ENCODE measurements at regions of chr10 and their contacts with region 1.

Region 1: DNA sequence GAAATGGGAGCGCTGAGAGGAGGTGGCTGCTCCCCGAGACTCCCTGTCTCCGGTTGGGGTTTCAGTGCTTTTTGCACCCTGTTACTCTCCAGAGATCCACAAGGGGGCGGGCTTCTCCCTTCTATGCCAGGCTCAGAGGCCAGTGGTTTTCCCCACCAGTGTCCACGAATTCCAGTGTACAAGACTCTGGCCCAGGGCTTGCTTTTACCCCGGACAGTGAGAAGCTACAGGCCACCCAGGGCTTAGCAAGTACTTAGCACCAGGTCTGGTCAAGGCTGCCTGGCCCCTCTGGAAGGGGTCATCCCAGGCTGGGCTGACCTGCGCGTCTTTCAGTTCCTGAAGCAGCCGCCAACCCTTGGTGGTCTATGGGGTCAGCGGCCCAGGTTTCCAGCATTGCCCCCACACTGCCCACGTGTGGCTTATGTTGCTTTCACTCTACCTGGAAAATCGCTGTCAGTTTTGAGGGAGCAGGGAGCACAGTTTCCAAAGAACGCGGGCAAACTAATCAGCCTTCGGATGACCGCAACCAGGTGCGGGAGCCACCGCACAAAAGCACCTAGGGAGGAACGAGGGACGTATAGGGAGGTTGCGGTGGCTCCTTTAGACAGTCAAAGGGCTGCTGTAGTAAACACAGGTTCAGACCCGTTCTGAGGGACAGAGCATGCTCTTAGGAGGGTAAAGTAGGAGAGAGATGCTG is 6.8 kb downstream of the CYP26A1 start:
- H3K4me3 ChIP-seq: no peak overlapping the region
- H3K27ac ChIP-seq: no peak overlapping the region
- H3K4me1 ChIP-seq: no peaks in the 10 kb centered on the region; the same call in none of the 2 replicates
- CTCF ChIP-seq: peak; percentile 54; the same call in 1 of the 2 replicates

Region 2: GRCh38 chr10:92923416-92923815 is 157.1 kb before region 1 on chr10:
- CTCF ChIA-PET with region 1: no interaction called
- POLR2A ChIA-PET with region 1: no interaction called
- H3K4me3 ChIP-seq: no peak overlapping the region
- H3K27ac ChIP-seq: no peak overlapping the region
- H3K4me1 ChIP-seq: no peaks in the 10 kb centered on the region
- CTCF ChIP-seq: no peak

Region 3: DNA sequence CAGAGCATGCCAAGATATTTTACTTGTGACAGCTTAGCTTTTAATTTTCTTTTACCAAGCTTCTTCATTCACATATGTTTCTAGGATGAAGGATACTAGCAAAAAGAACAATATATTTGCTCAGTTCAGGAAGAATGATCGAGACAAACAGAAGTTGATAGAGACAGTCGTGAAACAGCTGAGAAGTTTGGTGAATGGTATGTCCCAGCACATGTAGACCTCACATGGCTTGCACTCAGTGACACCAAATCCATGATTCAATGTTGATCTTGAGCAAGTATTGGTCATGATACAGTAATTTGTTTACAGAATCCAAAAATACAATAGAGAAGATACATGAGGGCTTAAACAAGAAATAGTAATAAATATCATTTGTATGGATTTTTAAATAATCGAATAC is 22.4 kb before region 1 on chr10:
- CTCF ChIA-PET with region 1: interaction called, 13 read pairs
- POLR2A ChIA-PET with region 1: no interaction called
- H3K4me3 ChIP-seq: no peak overlapping the region
- H3K27ac ChIP-seq: no peak overlapping the region
- H3K4me1 ChIP-seq: no peaks in the 10 kb centered on the region
- CTCF ChIP-seq: no peak

Region 4: GRCh38 chr10:93288654-93289634 is 208.4 kb after region 1 on chr10:
- CTCF ChIA-PET with region 1: interaction called, 23 read pairs
- POLR2A ChIA-PET with region 1: no interaction called
- H3K4me3 ChIP-seq: no peak overlapping the region
- H3K27ac ChIP-seq: no peak overlapping the region
- H3K4me1 ChIP-seq: no peaks in the 10 kb centered on the region
- CTCF ChIP-seq: peak; percentile 47; the same call in 1 of the 2 replicates

Region 5: DNA sequence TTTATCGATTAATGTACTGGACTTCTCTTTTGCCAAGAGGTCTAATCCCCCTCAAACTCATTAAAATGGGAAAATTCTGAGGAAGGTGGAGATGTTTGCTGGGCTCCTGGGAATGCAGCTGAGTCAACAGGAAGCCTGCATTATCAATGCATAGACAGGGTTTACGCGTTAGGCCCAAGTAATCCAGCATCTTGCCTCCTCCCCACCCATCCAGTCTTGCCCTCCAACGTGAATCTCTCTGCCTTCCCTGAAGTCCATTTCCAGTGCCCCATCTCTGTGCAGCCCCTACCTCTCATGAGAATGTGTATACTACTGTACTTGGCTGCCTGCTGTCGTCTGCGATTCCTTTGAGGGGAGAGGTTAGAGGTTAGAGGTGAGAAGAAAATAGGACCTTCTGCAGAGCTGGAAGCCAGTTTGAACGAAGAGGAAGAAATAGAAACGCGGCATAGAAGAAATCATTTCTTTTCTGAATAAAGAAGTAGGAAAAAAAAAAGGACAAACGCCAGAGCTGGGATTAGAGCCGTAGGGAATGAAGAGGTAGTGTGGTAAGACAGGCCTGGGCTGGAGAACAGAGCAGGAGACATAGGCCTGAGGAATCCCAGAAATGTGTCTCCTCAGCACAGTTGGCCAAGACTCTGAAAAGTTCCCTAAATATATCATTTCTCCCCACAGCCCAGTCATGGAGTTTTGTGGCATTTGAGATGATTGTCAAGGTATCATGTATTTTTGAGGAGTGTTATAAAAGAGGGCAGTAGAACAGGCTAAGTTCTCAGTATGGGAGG is 326.1 kb after region 1 on chr10:
- CTCF ChIA-PET with region 1: no interaction called
- POLR2A ChIA-PET with region 1: no interaction called
- H3K4me3 ChIP-seq: no peak overlapping the region
- H3K27ac ChIP-seq: no peak overlapping the region
- H3K4me1 ChIP-seq: no peaks in the 10 kb centered on the region
- CTCF ChIP-seq: no peak